ENCODE measurements at regions of chr7 and their contacts with region 1.

Region 1: DNA sequence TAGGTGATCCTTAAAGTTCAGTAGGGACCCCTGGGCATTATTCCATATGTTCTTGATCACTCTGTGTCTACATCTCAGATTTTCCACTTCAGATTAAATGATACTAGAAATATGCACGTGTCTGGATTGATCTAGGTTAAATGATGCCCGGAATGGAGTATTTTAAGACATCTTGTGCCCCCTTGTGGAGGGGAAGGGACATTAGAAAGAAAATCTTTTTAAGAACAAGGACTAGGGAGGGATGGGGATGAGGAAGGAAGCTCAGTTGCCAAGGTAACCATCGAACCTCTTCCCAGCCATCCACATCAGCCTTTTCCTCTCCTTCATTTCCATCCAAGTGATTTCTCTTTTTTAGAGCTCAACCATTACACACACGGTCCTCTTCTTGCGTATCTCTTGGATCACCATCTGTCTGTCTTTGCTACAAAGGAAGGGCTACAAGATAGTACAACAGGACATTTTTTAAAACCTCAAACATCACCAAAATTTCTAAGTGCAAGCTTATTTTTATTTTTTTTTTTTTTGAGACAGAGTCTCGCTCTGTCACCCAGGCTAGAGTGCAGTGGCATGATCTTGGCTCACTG is 40.5 kb downstream of the PRSS2 start:
- DNase-seq: peak; percentile 85

Region 2: DNA sequence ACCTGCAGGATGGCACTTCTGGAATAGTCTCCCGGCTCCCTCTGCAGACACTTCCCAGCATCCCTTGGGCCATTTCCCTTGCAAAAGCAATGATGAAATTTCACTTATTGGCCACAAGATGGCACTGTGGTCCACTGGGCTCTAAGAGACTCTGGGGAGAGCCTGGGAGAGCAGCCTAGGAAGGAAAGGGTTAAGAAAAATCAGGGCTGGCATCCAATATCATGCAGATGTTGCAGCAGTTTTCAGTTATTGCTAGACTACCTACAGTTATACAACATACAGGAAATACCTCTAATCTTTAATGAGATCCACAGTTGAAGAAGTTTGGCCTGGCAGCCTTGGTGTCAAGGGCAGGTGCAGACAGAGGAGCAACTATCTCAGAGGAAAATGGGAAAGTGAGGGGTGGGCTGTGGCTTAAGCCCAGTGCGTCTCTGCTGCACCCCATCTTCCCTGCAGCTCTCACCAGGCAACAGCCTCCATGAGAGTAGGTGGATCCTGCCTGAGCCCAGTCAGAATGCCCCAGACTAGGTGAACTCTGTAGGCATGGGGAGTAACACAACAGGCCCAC is 453.2 kb before region 1 on chr7:
- in situ Hi-C with region 1: loop called (anchors 25 kb)
- DNase-seq: peak; percentile 92